ENCODE measurements at regions of chr9 and their contacts with region 1.

Region 1: GRCh38 chr9:137295238-137295811 is 6.7 kb downstream of the NRARP start:
- DNase-seq: no peak
- H3K4me3 ChIP-seq: peak overlapping the region in 45 of 59 donors; percentile 6 to 58 (median 37)
- H3K27ac ChIP-seq: no peak overlapping the region
- H3K27me3 ChIP-seq: peaks cover 0 to 61% (median 15%) of the 10 kb centered on the region in 45 donors
- CTCF ChIP-seq: peak in 43 of 56 donors; percentile 10 to 83 (median 54)

Region 2: DNA sequence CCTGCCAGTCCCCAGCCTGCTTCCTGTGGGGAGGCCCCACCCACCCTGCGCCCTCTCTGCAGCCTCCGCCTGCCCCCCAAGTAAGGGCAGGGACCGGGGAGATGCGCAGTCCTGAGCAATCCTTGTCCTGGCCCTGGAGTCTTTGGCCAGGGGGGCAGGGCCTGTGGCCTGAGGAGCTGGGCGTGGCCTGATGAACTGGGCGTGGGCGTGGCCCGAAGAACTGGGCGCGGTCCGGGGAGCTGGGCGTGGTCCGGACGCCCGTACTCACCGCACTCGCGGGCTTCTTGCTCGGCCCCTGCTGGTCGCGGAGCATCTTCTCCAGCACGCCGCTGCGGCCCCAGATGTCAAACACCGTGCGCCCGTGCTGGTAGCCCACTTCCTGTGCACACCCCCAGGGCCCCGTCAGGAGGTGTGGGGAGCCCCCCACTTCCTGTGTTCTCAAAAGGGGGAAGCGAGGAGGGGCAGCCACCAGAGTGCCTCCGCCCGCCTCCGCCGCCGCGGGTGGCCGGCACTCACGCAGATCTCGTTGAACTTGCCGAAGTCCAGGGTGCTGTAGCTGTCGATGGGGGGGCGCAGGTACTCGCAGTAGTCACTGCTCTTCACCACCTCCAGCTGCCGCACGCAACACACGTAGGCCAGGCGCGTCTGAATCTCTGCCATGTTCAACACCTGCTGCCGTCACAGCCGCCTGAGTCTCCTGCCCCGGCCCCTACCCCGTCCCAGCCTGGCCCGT is 166.5 kb after region 1 on chr9:
- intact Hi-C with region 1: no loop called
- DNase-seq: peak in 3 of 10 donors; percentile 4 to 45 (median 39)
- H3K4me3 ChIP-seq: no peak overlapping the region
- H3K27ac ChIP-seq: no peak overlapping the region
- H3K27me3 ChIP-seq: no peaks in the 10 kb centered on the region
- CTCF ChIP-seq: no peak

Region 3: GRCh38 chr9:137521405-137521985 is 226.2 kb after region 1 on chr9:
- intact Hi-C with region 1: loop called in 1 of 2 experiments (anchors 10 kb)
- DNase-seq: no peak
- H3K4me3 ChIP-seq: no peak overlapping the region
- H3K27ac ChIP-seq: no peak overlapping the region
- H3K27me3 ChIP-seq: no peaks in the 10 kb centered on the region
- CTCF ChIP-seq: no peak

Measured in dorsolateral prefrontal cortex (tissue), 120 donors.